ENCODE measurements at regions of chr12 and their contacts with region 1.

Region 1: DNA sequence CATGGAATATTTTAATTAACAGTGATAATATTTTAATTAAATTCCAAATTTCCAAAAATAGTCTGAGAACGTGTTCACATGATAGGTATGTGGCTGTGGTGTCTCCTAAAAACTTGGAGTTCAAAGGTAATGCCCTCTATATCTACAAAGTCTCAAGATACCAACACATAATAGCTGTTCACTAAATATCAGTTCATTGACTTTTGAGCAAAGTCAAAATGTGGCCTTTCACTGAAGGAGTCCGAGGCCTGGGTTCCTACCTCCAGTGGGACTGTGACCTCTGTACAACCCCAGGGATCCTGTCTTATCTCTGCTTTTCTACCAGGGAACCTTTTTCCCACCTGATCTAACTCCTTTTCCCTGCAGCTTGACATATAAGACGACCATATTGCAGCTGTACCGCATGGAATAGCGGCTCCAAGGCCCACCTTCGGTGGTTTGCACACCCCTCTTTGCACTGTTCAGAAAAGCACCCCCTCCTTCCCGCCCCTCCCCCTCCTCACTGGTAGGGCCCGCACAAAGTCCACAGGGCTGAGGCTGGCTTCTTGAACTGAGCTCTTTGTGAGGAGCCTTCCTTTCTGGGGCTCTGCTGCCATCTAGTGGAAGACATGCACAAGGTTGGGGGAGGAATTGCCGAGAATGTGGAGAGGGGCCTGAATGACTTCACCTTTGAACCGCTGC is 3.1 kb downstream of the CCND2 start:
- DNase-seq: peak; percentile 79
- H3K4me3 Mint-ChIP-seq: peak overlapping the region; percentile 94
- H3K27ac Mint-ChIP-seq: peak overlapping the region; percentile 96
- H3K4me1 Mint-ChIP-seq: peaks cover 57% of the 10 kb centered on the region
- H3K27me3 Mint-ChIP-seq: no peaks in the 10 kb centered on the region

Region 2: DNA sequence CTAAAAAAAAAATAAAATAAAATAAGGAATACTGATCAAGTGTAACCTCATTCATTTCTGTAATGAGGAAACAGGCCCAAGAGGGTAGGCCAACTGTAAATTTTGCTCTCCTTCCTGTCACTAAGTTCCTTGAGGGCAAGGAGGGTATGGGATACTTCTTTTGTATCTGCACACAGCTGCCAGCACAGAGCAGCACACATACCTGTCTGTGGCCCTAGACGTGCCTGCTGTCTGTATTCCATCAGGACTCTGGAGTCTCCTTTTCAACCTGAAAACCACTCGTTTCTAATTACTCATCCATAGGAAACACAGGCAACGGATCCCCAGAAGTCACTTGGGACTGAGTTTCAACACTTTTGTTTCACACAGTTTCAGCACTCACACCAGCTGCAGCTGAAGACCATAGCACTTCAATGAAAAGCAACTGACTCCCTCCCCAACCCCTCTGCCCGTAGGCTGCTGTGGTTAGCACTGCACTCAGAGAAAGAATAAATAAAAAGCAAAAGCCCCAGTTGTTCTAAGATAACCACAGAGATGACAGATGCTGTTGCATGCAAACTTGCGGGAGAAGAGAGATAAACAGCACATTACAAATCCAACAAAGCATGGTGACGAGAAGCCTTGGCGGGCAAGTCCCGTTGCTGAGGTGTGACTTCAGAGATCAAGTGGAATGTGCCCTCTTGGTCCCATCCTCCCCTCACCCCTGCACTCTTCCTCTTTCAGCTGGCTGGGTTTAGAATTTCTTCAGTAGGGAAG is 548.6 kb before region 1 on chr12:
- intact Hi-C with region 1: loop called (anchors 1 kb)
- DNase-seq: peak; percentile 69
- H3K4me3 Mint-ChIP-seq: peak overlapping the region; percentile 83
- H3K27ac Mint-ChIP-seq: peak overlapping the region; percentile 95
- H3K4me1 Mint-ChIP-seq: peaks cover 46% of the 10 kb centered on the region
- H3K27me3 Mint-ChIP-seq: no peaks in the 10 kb centered on the region

Region 3: GRCh38 chr12:3885277-3886094 is 391.2 kb before region 1 on chr12:
- intact Hi-C with region 1: loop called (anchors 1 kb)
- DNase-seq: no peak
- H3K4me3 Mint-ChIP-seq: no peak overlapping the region
- H3K27ac Mint-ChIP-seq: no peak overlapping the region
- H3K4me1 Mint-ChIP-seq: peaks cover 8% of the 10 kb centered on the region
- H3K27me3 Mint-ChIP-seq: peaks cover 12% of the 10 kb centered on the region

Region 4: DNA sequence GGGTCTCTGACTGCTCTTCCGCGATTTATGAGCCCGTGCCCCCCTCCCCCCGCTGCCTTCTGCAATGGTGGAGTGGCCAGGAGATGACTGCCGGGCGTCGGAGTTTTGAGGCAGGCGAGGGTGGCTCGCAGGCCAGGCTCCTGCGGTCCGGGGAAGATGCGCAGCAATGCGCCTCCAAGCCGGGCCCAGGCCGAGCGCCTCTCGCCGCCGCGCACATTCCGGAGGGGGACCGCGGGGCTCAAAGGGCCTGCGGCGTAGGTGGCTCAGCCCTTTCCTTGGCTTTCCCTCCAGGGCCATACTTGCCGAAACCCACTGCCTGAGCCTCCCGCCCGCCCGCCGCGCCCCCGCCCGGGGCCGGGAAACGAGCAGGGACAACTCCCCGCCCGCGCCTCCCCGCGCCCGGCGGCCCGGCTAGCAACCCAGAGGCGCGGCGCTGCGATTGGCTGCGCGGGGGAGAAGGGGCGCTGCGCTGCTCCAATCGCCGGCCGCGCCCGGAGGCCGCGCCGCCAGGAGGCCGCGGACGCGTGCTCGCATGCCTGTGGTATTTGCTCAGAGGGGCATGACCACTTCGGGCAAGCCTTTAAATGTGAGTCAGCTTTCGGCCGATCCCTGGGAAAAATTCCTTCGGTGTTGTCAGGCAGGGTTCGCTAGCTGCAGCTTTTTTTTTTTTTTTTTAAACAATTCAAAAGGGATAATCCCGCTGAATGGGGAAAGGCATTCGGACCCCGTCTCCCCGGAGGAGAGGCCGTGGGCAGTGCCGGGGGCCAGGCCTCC is 245.5 kb before region 1 on chr12:
- intact Hi-C with region 1: loop called (anchors 2 kb)
- DNase-seq: peak; percentile 69
- H3K4me3 Mint-ChIP-seq: peak overlapping the region; percentile 62
- H3K27ac Mint-ChIP-seq: no peak overlapping the region
- H3K4me1 Mint-ChIP-seq: peaks cover 22% of the 10 kb centered on the region
- H3K27me3 Mint-ChIP-seq: peaks cover 17% of the 10 kb centered on the region

Region 5: DNA sequence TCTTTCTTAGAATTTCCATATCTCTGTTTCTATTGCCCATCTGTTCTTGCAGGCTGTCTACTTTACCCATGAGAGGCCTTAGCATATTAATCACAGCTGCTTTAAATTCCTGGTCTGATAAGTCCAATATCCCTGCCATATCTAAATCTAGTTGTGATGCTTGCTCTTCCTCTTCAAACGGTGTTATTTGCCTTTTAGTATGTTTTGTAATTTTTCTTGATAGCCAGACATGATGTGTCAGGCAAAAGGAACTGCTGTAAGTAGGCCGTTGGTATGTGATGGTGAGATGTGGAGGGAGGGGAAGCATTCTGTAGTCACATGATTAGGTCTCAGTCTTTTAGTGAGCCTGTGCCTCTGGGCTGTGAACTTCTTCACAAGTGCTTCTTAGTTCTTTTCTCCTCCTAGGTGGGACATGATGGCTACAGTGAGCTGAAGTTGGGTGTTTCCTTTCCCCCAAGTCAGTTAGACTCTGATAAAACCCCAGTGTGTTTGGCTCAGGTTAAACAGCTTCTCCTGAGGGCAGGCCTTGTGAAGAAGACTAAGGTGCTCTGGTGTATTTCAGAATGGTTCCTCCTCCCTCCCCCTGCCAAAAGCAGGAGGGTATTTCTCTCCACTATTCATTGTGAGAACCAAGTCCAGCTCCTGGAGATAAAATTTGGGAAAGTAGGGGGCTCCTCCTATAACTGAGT is 207.5 kb before region 1 on chr12:
- intact Hi-C with region 1: no loop called
- DNase-seq: no peak
- H3K4me3 Mint-ChIP-seq: no peak overlapping the region
- H3K27ac Mint-ChIP-seq: no peak overlapping the region
- H3K4me1 Mint-ChIP-seq: no peaks in the 10 kb centered on the region
- H3K27me3 Mint-ChIP-seq: peaks cover 2% of the 10 kb centered on the region

Region 6: GRCh38 chr12:4153343-4153892 is 123.2 kb before region 1 on chr12:
- intact Hi-C with region 1: loop called (anchors 1 kb)
- DNase-seq: peak; percentile 78
- H3K4me3 Mint-ChIP-seq: peak overlapping the region; percentile 63
- H3K27ac Mint-ChIP-seq: peak overlapping the region; percentile 94
- H3K4me1 Mint-ChIP-seq: peaks cover 88% of the 10 kb centered on the region
- H3K27me3 Mint-ChIP-seq: no peaks in the 10 kb centered on the region

Region 7: DNA sequence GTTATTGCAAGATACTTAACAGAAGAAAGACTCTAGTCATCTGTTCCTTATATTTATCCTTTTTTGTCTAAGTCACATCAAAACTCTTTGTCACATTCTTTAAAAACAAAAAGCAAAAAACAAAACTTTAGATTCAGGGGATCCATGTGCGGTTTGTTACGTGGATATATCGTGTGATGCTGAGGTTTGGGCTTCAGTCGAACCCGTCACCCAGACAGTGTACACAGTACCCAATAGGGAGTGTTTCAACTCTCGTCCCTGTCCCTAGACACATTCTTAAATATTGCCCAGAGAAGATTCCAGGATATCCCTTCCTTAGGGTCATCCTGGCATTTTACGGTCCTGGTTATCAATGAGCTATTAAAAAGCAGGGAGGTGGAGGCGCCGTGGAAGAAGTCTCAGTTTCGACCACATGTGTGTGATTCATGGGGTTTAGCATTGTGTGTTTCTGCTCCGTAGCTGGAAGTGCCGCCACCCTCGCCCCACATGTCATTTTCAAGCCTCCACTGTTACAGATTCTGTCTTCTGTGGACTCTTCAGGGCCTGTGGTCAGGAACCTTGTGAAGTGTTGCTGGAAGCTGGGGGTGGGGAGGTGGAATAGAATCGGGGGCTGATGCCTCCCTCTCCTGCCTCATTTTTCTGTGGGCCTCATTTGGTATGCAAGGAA is 16.8 kb after region 1 on chr12:
- intact Hi-C with region 1: loop called (anchors 2 kb)
- DNase-seq: no peak
- H3K4me3 Mint-ChIP-seq: peak overlapping the region; percentile 70
- H3K27ac Mint-ChIP-seq: peak overlapping the region; percentile 96
- H3K4me1 Mint-ChIP-seq: peaks cover 69% of the 10 kb centered on the region
- H3K27me3 Mint-ChIP-seq: no peaks in the 10 kb centered on the region

Measured in activated T-helper 1 cell treated with anti-CD3 and anti-CD28 coated beads, Interleukin-12 subunit alpha, Interleukin-12 subunit beta, Interleukin-2, Interleukin-4 antibody, amounts not matched to agents 30 ng/mL and 10 ng/mL and 1 ng/mL, durations not matched to agents 14 hours and 24 hours and 36 hours (primary cell).